HCT116 (cell line): ENCODE measurements at regions of chr3 and their contacts with region 1.

Region 1: GRCh38 chr3:73100741-73101559 is 39.5 kb downstream of the EBLN2 start:
- DNase-seq: peak; percentile 57
- ATAC-seq: peak; percentile 96
- H3K4me3 ChIP-seq: no peak overlapping the region
- H3K27ac ChIP-seq: no peak overlapping the region
- H3K4me1 ChIP-seq: no peaks in the 10 kb centered on the region
- H3K27me3 ChIP-seq: no peaks in the 10 kb centered on the region
- CTCF ChIP-seq: peak; percentile 74 to 95 (median 92)
- POLR2A ChIP-seq: no peak
- RAD21 ChIP-seq: peak; percentile 85

Region 2: DNA sequence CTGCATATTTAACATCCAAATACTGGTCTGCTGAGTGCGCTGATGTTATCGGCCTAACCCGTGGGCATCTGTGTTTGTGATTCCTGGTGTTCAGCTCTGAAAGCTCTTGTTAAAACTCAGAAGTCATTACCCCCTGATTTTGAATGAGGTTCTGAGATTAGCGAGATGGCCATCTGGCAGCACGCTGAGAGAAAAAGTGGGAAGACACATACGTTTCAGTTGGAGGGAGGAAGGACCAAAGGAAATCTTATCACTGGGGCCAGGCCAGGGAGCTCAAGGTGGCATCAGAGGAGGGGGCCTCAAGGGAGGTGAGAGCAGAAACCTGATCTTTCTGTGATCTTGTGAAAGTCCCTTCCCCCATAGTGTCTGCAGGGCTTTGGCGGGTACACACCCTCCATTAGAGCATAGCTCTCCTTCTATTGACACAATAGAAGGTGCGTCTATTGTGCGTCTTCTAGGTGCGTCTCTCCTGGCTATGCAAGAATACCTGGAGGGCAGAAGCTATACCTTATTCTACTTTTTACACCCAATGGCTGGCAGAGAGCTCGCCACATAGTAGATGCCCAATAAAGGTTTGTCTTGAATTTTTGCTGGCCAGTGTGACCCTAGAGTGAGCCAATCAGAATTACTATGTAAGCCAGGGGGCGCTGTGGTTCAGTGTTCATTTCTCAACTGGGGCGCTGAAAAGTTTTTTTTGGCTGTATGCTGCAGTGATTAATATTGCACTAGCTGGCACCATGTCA is 435.1 kb before region 1 on chr3:
- CTCF ChIA-PET with region 1: no interaction called
- POLR2A ChIA-PET with region 1: no interaction called
- RAD21 ChIA-PET with region 1: no interaction called
- intact Hi-C with region 1: loop called (anchors 5 kb)
- DNase-seq: no peak
- ATAC-seq: peak; percentile 85
- H3K4me3 ChIP-seq: no peak overlapping the region
- H3K27ac ChIP-seq: no peak overlapping the region
- H3K4me1 ChIP-seq: peaks cover 6 to 9% of the 10 kb centered on the region in 2 experiments
- H3K27me3 ChIP-seq: no peaks in the 10 kb centered on the region
- CTCF ChIP-seq: peak; percentile 57 to 76 (median 65); a peak in 5 of 6 replicates
- POLR2A ChIP-seq: no peak
- RAD21 ChIP-seq: peak; percentile 77

Region 3: DNA sequence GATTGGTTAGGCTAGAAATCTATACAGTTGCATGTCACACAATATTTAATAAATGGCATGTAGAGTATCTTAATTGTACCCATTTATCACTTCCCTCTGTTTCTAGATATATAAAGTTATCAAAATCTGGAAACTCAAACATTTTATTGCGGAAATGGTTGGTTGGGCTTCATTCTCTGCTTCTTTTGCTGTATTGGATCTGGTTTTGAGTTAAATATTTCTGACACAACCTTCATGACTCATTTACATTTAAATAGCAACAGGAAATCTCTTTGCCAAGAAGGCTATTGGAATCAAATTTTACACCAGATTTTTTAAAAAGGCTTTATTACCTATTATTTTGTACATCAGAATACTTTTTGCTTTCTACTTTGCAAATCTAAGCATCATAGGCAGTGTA is 114.3 kb after region 1 on chr3:
- CTCF ChIA-PET with region 1: no interaction called
- POLR2A ChIA-PET with region 1: no interaction called
- RAD21 ChIA-PET with region 1: no interaction called
- intact Hi-C with region 1: no loop called
- DNase-seq: no peak
- ATAC-seq: no peak
- H3K4me3 ChIP-seq: no peak overlapping the region
- H3K27ac ChIP-seq: no peak overlapping the region
- H3K4me1 ChIP-seq: no peaks in the 10 kb centered on the region
- H3K27me3 ChIP-seq: peaks cover 28% of the 10 kb centered on the region
- CTCF ChIP-seq: no peak
- POLR2A ChIP-seq: no peak
- RAD21 ChIP-seq: no peak

Region 4: GRCh38 chr3:73432023-73432705 is 331.2 kb after region 1 on chr3:
- CTCF ChIA-PET with region 1: no interaction called
- POLR2A ChIA-PET with region 1: no interaction called
- RAD21 ChIA-PET with region 1: no interaction called
- intact Hi-C with region 1: loop called (anchors 1 kb)
- DNase-seq: peak; percentile 15
- ATAC-seq: peak; percentile 58
- H3K4me3 ChIP-seq: no peak overlapping the region
- H3K27ac ChIP-seq: no peak overlapping the region
- H3K4me1 ChIP-seq: no peaks in the 10 kb centered on the region
- H3K27me3 ChIP-seq: peaks cover 29% of the 10 kb centered on the region
- CTCF ChIP-seq: peak; percentile 56 to 69 (median 58)
- POLR2A ChIP-seq: no peak
- RAD21 ChIP-seq: peak; percentile 59

Region 5: GRCh38 chr3:73502609-73503583 is 401.9 kb after region 1 on chr3:
- CTCF ChIA-PET with region 1: interaction called, 6 read pairs
- POLR2A ChIA-PET with region 1: no interaction called
- RAD21 ChIA-PET with region 1: no interaction called
- intact Hi-C with region 1: loop called (anchors 1 kb)
- DNase-seq: peak; percentile 56
- ATAC-seq: peak; percentile 81
- H3K4me3 ChIP-seq: no peak overlapping the region
- H3K27ac ChIP-seq: no peak overlapping the region
- H3K4me1 ChIP-seq: no peaks in the 10 kb centered on the region
- H3K27me3 ChIP-seq: peaks cover 8% of the 10 kb centered on the region; the same call in 1 of the 2 replicates
- CTCF ChIP-seq: peak; percentile 56 to 84 (median 70); a peak in 5 of 6 replicates
- POLR2A ChIP-seq: no peak
- RAD21 ChIP-seq: peak; percentile 76